A549 (cell line): ENCODE measurements at regions of chr1 and their contacts with region 1.

Region 1: DNA sequence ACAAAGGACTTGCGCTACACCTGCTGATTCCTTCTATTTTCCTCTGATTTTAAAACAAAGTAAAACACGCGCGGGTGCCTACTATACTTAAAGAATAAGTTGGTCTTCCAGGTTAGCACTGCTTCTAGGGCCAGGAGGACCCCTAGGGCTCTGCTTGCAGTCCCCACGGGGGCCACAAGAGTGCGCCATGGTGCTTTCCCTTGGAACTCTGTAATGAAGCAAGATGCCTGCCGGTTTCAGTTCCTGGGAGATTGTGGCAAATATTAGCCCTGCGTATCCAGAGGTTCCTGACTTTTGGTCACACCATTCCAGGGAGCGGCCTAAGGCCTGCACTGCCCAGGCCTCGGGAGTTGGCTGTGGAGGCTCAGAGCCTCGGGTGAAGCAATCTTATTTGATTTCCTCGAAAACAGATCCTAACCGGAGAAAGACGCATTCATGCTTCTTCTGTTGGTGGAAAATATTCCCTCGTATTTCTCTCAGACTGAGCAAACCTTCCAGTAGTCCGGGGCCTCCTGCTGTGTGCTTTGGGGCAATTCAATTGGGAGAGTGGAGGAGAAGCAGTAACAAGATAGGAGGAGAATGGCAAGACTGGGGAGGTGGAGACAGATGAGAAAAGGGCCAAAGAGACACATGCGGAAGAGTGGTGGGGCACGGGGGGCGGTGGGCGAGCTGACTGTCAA is 25.3 kb downstream of the ADAM30 start:
- DNase-seq: peak; percentile 54 to 62
- ATAC-seq: peak; percentile 89 to 95
- H3K4me3 ChIP-seq: no peak overlapping the region
- H3K27ac ChIP-seq: peak overlapping the region in 1 of 2 experiments; percentile 51; a peak in 1 of 6 replicates
- H3K4me1 ChIP-seq: no peaks in the 10 kb centered on the region
- CTCF ChIP-seq: peak; percentile 71
- EP300 ChIP-seq: no peak
- POLR2A ChIP-seq: no peak
- RAD21 ChIP-seq: peak; percentile 74

Region 2: GRCh38 chr1:119859647-119860046 is 11.4 kb before region 1 on chr1:
- CTCF ChIA-PET with region 1: interaction called, 10 read pairs
- POLR2A ChIA-PET with region 1: no interaction called
- DNase-seq: peak in 1 of 2 experiments; percentile 12
- ATAC-seq: no peak
- H3K4me3 ChIP-seq: no peak overlapping the region
- H3K27ac ChIP-seq: no peak overlapping the region
- H3K4me1 ChIP-seq: no peaks in the 10 kb centered on the region
- CTCF ChIP-seq: no peak
- EP300 ChIP-seq: no peak
- POLR2A ChIP-seq: no peak
- RAD21 ChIP-seq: no peak

Region 3: DNA sequence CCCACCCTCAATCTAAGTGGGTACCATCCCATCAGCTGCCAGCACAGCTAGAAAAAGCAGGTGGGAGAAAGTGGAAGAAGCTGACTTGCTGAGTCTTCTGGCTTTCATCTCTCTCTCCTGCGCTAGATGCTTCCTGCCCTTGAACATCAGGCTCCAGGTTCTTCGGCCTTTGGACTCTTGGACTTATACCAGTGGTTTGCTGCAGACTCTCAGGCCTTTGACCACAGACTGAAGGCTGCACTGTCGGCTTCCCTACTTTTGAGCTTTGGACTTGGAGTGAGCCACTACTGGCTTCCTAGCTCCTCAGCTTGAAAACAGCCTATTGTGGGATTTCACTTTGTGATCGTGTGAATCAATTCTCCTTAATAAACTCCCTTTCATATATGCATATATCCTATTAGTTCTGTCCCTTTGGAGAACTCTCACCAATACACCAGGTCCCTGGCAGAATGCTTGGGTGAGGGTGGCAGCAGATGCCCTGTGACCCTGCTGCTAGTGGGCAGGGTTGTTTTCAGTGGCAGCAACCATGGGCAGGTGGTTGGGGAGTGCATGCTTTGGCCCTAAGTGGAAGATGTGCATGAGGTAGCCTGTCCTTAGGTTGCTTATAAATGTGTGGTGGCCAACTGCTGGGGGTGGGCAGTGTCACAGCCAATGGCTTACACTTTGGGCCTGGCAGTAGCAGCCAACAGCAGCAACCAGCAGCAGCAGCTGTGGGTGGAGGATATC is 36.0 kb after region 1 on chr1:
- CTCF ChIA-PET with region 1: no interaction called
- POLR2A ChIA-PET with region 1: no interaction called
- DNase-seq: no peak
- ATAC-seq: no peak
- H3K4me3 ChIP-seq: no peak overlapping the region
- H3K27ac ChIP-seq: no peak overlapping the region
- H3K4me1 ChIP-seq: no peaks in the 10 kb centered on the region
- CTCF ChIP-seq: no peak
- EP300 ChIP-seq: no peak
- POLR2A ChIP-seq: no peak
- RAD21 ChIP-seq: no peak